HCT116 (cell line): ENCODE measurements at regions of chr4 and their contacts with region 1.

Region 1: GRCh38 chr4:144141493-144141892 is 975 bp upstream of the GYPA start:
- DNase-seq: no peak
- ATAC-seq: no peak
- H3K4me3 ChIP-seq: no peak overlapping the region
- H3K27ac ChIP-seq: no peak overlapping the region
- H3K4me1 ChIP-seq: no peaks in the 10 kb centered on the region
- H3K27me3 ChIP-seq: no peaks in the 10 kb centered on the region
- CTCF ChIP-seq: no peak
- POLR2A ChIP-seq: no peak
- RAD21 ChIP-seq: no peak

Region 2: DNA sequence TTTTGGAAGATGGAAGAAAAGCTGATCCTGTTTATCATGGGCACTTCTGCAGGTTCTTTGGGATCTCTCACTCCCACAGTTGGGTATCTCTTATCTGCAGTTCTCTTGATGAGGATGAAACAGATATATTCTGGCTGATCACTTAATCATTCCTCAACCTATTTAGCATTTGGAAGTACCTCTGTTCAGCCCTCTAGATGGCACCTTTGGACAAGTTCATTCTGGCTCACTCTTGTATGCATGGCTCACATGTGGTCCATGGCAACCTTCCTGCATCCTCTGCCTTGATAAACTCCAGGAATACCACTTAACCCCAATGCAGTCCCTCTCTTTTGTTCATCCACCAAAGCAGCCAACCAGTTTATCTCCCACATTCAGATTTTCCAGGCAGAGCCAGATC is 553.8 kb before region 1 on chr4:
- CTCF ChIA-PET with region 1: no interaction called
- POLR2A ChIA-PET with region 1: no interaction called
- RAD21 ChIA-PET with region 1: no interaction called
- intact Hi-C with region 1: loop called (anchors 5 kb)
- DNase-seq: peak; percentile 18
- ATAC-seq: peak; percentile 79
- H3K4me3 ChIP-seq: no peak overlapping the region
- H3K27ac ChIP-seq: no peak overlapping the region
- H3K4me1 ChIP-seq: no peaks in the 10 kb centered on the region
- H3K27me3 ChIP-seq: no peaks in the 10 kb centered on the region
- CTCF ChIP-seq: peak in 2 of 3 experiments; percentile 27 to 28; a peak in 3 of 6 replicates
- POLR2A ChIP-seq: no peak
- RAD21 ChIP-seq: peak; percentile 55

Region 3: DNA sequence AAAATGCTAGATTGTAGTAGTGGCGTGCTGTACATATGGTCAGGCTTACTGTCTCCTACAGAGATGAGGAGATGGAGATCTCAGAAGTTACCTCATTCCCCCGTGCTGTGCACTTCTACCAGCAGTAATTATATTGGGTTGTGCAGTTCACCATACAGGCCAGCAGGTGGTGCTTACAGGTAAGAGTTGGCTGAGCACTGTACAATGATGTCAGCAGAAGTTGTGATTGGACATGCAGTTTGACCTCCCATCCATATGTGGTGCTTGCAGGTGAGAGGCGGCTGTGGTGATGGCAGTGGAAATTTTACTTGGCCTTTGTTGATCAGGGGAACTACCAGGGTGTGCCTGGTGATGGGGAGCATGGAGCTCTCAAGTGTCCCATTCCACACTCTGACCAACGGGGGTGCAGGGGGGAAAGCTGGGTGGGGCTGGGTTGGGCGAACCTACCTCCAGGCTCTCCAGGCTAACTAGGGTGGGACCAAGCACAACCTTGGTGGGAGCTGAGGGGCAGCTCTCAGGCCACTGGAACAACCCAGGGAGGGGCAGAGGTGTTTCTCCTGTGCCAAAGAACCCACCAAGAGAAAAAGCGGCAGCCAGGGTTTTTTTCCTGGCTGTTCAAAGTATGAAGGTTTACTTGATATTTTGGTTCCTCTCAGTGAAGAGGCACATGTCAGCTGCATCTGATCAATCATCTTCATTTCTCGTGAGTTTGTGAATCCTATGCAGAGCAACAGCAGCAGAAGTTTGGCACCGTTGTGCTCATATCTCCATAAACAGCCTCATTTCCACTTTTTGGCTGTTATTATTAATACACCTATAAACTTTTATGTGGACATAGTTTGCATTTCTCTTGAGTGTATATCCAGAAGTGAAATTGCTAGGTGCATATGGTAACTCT is 367.2 kb before region 1 on chr4:
- CTCF ChIA-PET with region 1: no interaction called
- POLR2A ChIA-PET with region 1: no interaction called
- RAD21 ChIA-PET with region 1: no interaction called
- intact Hi-C with region 1: loop called (anchors 5 kb)
- DNase-seq: peak; percentile 58
- ATAC-seq: peak; percentile 98
- H3K4me3 ChIP-seq: no peak overlapping the region
- H3K27ac ChIP-seq: no peak overlapping the region
- H3K4me1 ChIP-seq: no peaks in the 10 kb centered on the region
- H3K27me3 ChIP-seq: no peaks in the 10 kb centered on the region
- CTCF ChIP-seq: peak; percentile 69 to 83 (median 73)
- POLR2A ChIP-seq: no peak
- RAD21 ChIP-seq: peak; percentile 84